ENCODE measurements at regions of chr1 and their contacts with region 1.

Region 1: DNA sequence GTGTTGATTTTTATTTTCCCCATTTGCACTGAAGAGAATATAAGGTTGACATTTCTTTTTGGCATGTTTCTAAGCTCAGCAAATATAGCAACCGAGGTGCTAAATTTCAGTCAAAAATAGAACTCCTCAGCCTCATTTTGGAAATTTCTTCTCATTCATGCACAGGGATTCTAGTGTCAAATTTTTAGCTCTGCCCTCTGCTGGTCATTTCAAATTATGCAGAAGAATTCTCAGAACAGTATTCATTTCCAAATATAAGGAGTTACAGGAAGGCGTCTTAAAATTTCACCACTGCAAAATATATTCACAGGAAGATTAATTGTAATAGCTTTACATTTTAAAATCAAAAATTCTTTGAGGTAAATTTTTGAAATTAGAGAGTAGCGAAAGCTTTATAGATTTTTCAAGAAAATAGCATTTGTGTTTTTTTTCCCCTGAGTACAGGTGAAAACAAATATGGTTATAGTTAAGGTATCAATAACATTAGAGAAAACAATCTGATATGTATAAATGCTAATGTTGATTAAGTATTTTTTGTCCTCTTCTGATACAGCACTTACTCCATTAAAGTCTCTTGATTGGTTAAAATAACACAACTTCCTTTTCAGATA is 57.9 kb downstream of the FMN2 start:
- DNase-seq: no peak
- CTCF ChIP-seq: peak; percentile 67

Region 2: DNA sequence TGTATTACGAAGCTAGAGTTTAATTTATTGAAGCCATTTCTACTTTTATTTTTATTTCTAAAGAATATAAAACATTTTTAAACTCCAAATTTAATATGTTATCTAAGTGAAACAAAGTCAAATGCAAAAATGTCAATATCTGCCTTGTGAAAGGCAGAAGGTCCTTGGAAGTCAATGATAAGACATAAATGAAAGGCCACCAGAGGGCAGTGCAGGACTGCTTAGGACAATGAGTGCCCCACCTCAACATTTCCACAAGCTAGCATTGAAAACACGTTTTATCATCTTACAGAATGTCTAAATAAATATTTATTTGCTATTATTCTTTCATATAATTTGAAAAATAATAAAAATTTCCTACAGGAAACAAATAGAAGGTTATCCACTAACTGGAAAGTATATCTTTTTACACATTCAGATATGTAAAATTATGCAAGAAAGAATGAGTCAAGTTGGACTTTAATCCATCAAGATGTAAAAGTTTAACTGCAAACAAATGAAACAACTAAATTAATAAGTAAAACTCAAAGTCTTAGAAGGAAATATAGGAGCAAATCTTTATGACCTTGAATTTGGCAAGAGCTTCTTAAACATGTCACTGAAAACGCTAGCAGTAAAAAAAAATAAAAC is 198.0 kb before region 1 on chr1:
- CTCF ChIA-PET with region 1: interaction called, 17 read pairs
- POLR2A ChIA-PET with region 1: no interaction called
- DNase-seq: peak; percentile 38
- CTCF ChIP-seq: peak; percentile 61

Region 3: DNA sequence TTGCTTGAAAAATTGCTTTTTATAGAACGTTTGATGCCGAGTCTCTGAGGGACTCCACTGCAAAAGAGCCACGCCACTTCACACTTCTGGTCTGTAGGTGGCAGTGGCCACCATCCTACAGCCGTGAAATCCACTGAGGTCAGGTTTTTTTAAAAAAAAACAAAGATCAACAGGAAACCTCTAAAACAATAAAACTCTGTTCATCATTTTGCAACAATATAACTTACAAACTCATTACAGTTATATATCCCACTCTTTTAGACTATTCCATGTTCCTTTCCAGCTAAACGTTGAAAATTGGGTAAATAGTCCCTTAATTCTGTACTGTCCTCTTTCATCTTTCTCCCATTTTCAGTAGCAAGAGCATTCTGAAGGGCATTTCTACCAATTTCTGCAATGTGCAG is 122.5 kb before region 1 on chr1:
- CTCF ChIA-PET with region 1: interaction called, 20 read pairs
- POLR2A ChIA-PET with region 1: no interaction called
- DNase-seq: peak; percentile 23
- CTCF ChIP-seq: peak; percentile 55

Region 4: DNA sequence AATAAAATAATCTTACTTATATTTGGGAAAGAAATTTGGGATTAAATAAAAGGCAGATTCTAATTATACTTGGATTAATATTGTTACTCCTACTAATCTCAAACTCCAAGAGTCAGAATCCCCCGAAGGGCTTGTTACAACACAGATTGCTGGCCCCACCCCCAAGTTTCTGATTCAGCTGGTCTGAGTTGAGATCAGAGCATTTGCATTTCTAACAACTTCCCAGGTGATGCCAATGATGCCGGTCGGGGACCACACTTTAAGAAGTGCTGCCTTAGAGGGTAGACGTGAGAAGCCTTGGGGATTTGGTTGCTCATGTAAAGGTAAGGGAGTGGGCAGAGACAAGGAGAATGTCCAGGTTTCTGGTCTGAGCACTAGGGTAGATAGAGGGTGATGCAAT is 10.7 kb before region 1 on chr1:
- CTCF ChIA-PET with region 1: interaction called, 25 read pairs
- POLR2A ChIA-PET with region 1: no interaction called
- DNase-seq: no peak
- CTCF ChIP-seq: no peak

Region 5: DNA sequence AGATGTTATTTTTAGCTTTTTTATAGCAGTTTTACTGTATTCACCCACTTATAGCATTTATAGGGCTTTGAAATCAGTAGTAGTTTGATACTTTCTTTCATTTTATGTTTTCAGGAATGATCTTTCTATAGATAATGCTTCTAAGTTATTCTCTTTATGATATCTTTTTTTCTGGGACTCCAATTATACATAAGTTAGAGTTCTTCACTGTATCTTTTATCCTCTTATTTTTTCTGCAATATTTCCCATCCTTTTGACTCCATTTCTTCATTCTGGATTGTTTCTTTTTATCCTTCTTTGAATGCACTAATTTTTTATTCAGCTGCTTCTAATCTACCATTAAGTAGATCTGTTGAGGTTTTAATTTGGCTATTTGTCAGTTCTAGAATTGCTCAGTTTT is 15.2 kb after region 1 on chr1:
- CTCF ChIA-PET with region 1: interaction called, 27 read pairs
- POLR2A ChIA-PET with region 1: no interaction called
- DNase-seq: no peak
- CTCF ChIP-seq: no peak

Measured in GM10248 (cell line).